ENCODE measurements at regions of chr5 and their contacts with region 1.

Region 1: DNA sequence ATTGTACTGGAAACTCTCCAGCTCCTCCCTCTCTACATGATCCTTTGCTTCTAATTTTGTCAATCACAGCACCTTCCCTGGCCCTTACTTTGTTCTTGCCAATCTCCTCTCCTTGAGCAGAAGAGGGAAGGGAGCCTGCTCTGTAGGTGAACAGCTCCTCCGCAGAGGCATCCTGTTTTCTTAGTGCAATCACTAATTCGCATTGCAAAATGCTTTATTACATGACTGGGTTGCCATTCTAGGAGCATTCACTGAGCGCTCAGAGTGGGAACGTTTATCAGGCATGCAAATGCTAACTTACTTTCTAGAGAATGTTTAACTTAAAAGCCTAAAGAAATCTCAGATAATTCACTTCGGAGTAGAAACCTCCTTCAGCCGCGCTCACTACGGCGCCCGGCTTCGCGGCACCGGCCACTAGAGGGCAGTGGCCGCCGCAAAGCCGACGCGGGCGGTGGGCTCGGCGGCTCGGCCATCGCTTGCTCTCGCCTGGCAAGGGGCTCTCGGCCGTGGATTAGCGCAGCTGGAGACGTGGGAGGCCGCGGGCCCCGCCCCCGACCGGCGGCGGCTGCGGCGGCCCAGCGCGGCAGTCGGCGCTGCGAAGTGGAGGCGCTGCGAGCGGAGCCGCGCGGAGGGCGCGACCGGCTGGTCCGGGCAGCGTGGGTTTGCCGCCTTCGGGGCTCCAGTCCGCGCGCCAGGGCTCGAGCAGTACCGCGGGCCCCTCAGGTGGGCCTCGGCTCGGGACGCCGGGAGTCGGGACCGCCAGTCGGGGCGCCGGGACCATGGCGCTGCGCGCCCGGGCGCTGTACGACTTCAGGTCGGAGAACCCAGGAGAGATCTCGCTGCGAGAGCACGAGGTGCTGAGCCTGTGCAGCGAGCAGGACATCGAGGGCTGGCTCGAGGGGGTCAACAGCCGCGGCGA is at the start of gene SNX18:
- DNase-seq: peak; percentile 88 to 95 (median 91)
- H3K4me3 ChIP-seq: peak within 1 kb of the TSS; percentile 68
- H3K4me3 Mint-ChIP-seq: peak within 1 kb of the TSS; percentile 86 to 97 (median 89)
- H3K27ac ChIP-seq: peak within 1 kb of the TSS; percentile 76
- H3K27ac Mint-ChIP-seq: peak within 1 kb of the TSS in 6 of 8 donors; percentile 35 to 88 (median 47)
- H3K4me1 ChIP-seq: peaks cover 37% of the 10 kb centered on the region
- H3K4me1 Mint-ChIP-seq: peaks cover 24 to 39% (median 35%) of the 10 kb centered on the region in 3 donors
- H3K27me3 ChIP-seq: no peaks in the 10 kb centered on the region
- H3K27me3 Mint-ChIP-seq: no peaks in the 10 kb centered on the region
- total RNA-seq, gene SNX18: 21.5 to 23.9 TPM

Region 2: DNA sequence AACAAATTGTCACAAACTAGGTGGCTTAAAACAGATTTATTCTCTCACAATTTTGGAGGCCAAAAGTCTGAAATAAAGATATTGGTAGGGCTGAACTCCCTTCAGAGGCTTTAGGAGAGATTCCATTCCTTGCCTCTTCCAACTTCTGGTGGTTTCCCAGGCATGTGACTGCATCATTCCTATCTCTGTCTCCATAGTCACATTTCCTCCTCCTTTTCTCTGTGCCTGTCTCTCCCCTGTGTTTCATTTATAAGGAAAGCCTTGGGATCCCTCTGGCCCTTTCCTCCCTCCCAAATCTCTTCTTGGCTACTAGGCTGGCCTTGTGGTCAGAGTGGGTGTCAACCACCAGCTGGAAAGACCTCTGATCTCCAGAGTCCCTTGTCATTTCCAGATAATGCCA is 78.3 kb after region 1 on chr5:
- CTCF ChIA-PET with region 1: no interaction called
- POLR2A ChIA-PET with region 1: no interaction called
- DNase-seq: no peak
- H3K4me3 ChIP-seq: no peak overlapping the region
- H3K4me3 Mint-ChIP-seq: no peak overlapping the region
- H3K27ac ChIP-seq: no peak overlapping the region
- H3K27ac Mint-ChIP-seq: no peak overlapping the region
- H3K4me1 ChIP-seq: no peaks in the 10 kb centered on the region
- H3K4me1 Mint-ChIP-seq: no peaks in the 10 kb centered on the region
- H3K27me3 ChIP-seq: no peaks in the 10 kb centered on the region
- H3K27me3 Mint-ChIP-seq: peaks cover 0 to 5% of the 10 kb centered on the region in 2 donors

Region 3: DNA sequence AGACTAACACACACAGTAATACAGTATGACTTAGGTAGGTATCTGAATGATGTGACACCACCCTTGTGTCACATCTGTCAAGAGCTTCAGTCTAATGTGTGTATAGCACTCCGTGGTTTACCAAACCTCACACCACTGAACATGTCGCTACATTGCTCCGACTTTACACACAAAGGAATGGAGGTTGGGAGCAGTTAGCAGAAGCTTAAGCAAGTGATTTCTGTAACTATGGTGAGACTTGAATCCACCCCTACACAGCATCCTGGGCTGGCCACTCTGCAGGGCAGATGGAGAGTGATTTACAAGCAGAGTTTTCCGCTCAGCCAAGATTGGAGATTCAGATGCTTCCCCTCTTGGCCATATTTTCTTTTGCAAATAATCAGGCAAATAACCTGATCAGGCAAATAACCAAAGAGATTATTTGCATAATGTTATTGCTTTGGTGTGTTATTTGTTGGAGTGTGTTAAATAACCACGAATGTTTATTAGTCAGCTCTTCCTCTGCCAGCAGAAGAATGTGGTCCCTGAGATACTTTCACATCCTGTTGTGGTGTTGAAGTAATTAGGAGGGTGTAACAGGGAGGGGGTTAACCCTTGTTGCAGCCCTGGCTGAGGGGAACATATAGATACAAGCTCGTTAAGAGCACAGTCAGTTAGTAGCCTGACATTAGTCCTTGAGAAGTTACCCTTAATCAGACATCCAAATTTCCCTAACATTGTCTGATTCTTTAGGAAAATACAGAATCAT is 92.9 kb after region 1 on chr5:
- CTCF ChIA-PET with region 1: interaction called, 24 read pairs
- POLR2A ChIA-PET with region 1: interaction called, 3 read pairs
- DNase-seq: peak; percentile 2 to 71 (median 15)
- H3K4me3 ChIP-seq: peak overlapping the region; percentile 26
- H3K4me3 Mint-ChIP-seq: peak overlapping the region; percentile 28 to 88 (median 74)
- H3K27ac ChIP-seq: no peak overlapping the region
- H3K27ac Mint-ChIP-seq: peak overlapping the region in 7 of 8 donors; percentile 62 to 89 (median 86)
- H3K4me1 ChIP-seq: peaks cover 22% of the 10 kb centered on the region
- H3K4me1 Mint-ChIP-seq: peaks cover 35 to 61% (median 58%) of the 10 kb centered on the region in 3 donors
- H3K27me3 ChIP-seq: no peaks in the 10 kb centered on the region
- H3K27me3 Mint-ChIP-seq: no peaks in the 10 kb centered on the region

Region 4: DNA sequence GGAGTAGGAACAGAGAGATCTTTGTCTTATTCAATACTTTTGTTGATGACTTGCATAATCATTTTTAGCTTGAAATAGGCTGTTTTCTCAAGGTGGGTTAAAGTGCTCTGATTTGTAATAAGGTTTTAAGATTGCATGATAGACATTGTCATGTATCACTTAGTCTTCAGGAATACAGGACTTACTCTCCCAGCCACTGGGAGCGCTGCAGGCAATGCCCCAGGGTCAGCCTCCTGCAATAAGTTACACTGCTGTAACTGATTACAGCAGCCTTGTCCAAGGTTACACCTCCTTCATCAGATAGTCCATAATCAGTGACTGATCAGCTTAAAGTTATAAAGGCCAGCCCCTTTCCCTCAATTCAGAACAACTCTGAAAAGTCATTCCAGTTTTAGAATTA is 249.3 kb after region 1 on chr5:
- CTCF ChIA-PET with region 1: interaction called, 17 read pairs
- POLR2A ChIA-PET with region 1: no interaction called
- DNase-seq: no peak
- H3K4me3 ChIP-seq: no peak overlapping the region
- H3K4me3 Mint-ChIP-seq: no peak overlapping the region
- H3K27ac ChIP-seq: no peak overlapping the region
- H3K27ac Mint-ChIP-seq: no peak overlapping the region
- H3K4me1 ChIP-seq: no peaks in the 10 kb centered on the region
- H3K4me1 Mint-ChIP-seq: no peaks in the 10 kb centered on the region
- H3K27me3 ChIP-seq: no peaks in the 10 kb centered on the region
- H3K27me3 Mint-ChIP-seq: no peaks in the 10 kb centered on the region

Region 5: GRCh38 chr5:54844905-54845566 is 327.6 kb after region 1 on chr5:
- CTCF ChIA-PET with region 1: interaction called, 111 read pairs
- POLR2A ChIA-PET with region 1: interaction called, 9 read pairs
- DNase-seq: peak in 2 of 5 donors; percentile 38 to 53
- H3K4me3 ChIP-seq: no peak overlapping the region
- H3K4me3 Mint-ChIP-seq: peak overlapping the region in 2 of 7 donors; percentile 21 to 29
- H3K27ac ChIP-seq: no peak overlapping the region
- H3K27ac Mint-ChIP-seq: peak overlapping the region in 2 of 8 donors; percentile 59 to 70
- H3K4me1 ChIP-seq: peaks cover 4% of the 10 kb centered on the region
- H3K4me1 Mint-ChIP-seq: peaks cover 2 to 9% (median 4%) of the 10 kb centered on the region in 3 donors
- H3K27me3 ChIP-seq: no peaks in the 10 kb centered on the region
- H3K27me3 Mint-ChIP-seq: peaks cover 13 to 17% of the 10 kb centered on the region in 2 donors

Region 6: GRCh38 chr5:54861212-54861894 is 343.9 kb after region 1 on chr5:
- CTCF ChIA-PET with region 1: interaction called, 80 read pairs
- POLR2A ChIA-PET with region 1: interaction called, 7 read pairs
- DNase-seq: no peak
- H3K4me3 ChIP-seq: no peak overlapping the region
- H3K4me3 Mint-ChIP-seq: no peak overlapping the region
- H3K27ac ChIP-seq: no peak overlapping the region
- H3K27ac Mint-ChIP-seq: no peak overlapping the region
- H3K4me1 ChIP-seq: no peaks in the 10 kb centered on the region
- H3K4me1 Mint-ChIP-seq: no peaks in the 10 kb centered on the region
- H3K27me3 ChIP-seq: no peaks in the 10 kb centered on the region
- H3K27me3 Mint-ChIP-seq: peaks cover 21 to 35% of the 10 kb centered on the region in 2 donors